ENCODE measurements at regions of chr14 and their contacts with region 1.

Region 1: DNA sequence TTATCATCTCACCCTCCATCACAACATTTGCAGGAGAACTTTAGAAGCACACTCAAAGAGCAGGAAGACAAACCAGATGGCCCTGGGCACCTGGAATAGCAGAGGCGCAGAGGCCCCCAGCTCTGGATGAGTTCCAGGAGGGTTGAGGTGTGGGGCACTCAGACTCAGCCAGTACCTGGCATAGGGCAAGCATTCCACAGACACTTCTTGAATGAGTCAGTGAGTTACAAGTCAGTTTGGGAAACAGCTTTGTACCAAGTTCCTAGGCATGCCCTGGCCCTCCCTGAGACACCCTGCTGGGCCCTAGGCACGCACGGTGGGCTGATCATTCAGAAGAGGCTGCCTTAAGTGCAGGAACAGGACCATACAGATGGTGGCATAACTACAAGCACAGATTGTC is 54.3 kb downstream of the MAP3K9 start:
- DNase-seq: peak; percentile 91
- H3K4me3 ChIP-seq: no peak overlapping the region
- H3K27ac ChIP-seq: peak overlapping the region; percentile 88
- H3K4me1 ChIP-seq: peaks cover 37% of the 10 kb centered on the region
- H3K27me3 ChIP-seq: no peaks in the 10 kb centered on the region
- CTCF ChIP-seq: peak in 1 of 2 donors; percentile 7

Region 2: DNA sequence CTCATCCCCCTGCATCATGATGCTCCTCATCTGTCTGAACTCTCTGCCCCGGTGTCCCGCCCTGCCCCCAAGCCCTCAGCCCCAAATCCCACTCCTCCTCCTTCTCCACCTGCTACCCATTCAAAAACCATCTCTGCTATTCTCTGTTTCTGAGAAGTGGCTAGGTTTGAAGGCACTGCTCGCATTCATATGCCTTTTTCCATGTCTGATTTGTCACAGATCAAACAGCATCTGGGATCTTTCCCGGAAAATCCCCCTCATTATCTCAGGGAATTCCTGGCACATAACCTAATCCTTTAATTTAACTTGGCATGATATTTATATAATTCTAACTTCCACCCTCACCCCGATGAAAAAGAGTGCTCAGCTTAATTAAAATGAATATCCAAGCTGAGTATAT is 216.9 kb before region 1 on chr14:
- CTCF ChIA-PET with region 1: no interaction called
- dilution Hi-C with region 1: no loop called
- in situ Hi-C with region 1: no loop called
- intact Hi-C with region 1: no loop called
- DNase-seq: no peak
- H3K4me3 ChIP-seq: no peak overlapping the region
- H3K27ac ChIP-seq: no peak overlapping the region
- H3K4me1 ChIP-seq: no peaks in the 10 kb centered on the region
- H3K27me3 ChIP-seq: no peaks in the 10 kb centered on the region
- CTCF ChIP-seq: no peak

Region 3: GRCh38 chr14:70622111-70622712 is 132.8 kb before region 1 on chr14:
- CTCF ChIA-PET with region 1: no interaction called
- dilution Hi-C with region 1: no loop called
- in situ Hi-C with region 1: no loop called
- intact Hi-C with region 1: loop called (anchors 1 kb)
- DNase-seq: peak; percentile 52
- H3K4me3 ChIP-seq: no peak overlapping the region
- H3K27ac ChIP-seq: no peak overlapping the region
- H3K4me1 ChIP-seq: peaks cover 7% of the 10 kb centered on the region
- H3K27me3 ChIP-seq: no peaks in the 10 kb centered on the region
- CTCF ChIP-seq: peak; percentile 92 to 95

Region 4: DNA sequence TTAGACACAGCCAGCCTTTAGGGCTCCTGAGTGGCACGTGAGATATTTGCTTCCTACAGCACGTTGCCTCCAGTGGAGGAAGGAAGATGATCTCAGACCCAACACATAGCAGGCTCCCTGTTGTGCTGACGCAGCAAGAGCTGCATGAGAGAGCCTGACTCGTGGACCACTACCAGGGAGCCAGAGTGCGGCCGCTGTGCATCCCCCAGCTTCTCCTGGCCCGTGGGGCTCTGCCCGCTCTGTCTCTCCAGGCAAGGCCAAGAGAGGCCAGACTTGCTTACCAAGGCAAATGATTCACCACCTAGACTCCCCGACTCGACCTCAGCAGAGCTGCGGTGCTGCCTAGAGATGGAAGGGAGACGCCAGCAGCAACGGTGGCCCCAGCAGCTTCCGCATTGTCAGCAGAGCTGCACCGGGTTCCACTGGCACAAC is 16.8 kb after region 1 on chr14:
- CTCF ChIA-PET with region 1: interaction called, 5 read pairs
- dilution Hi-C with region 1: no loop called
- in situ Hi-C with region 1: no loop called
- intact Hi-C with region 1: loop called (anchors 1 kb)
- DNase-seq: no peak
- H3K4me3 ChIP-seq: no peak overlapping the region
- H3K27ac ChIP-seq: peak overlapping the region; percentile 66
- H3K4me1 ChIP-seq: peaks cover 29% of the 10 kb centered on the region
- H3K27me3 ChIP-seq: no peaks in the 10 kb centered on the region
- CTCF ChIP-seq: no peak

Region 5: GRCh38 chr14:70780396-70781075 is 25.5 kb after region 1 on chr14:
- CTCF ChIA-PET with region 1: interaction called, 4 read pairs
- dilution Hi-C with region 1: no loop called
- in situ Hi-C with region 1: no loop called
- intact Hi-C with region 1: loop called (anchors 1 kb)
- DNase-seq: no peak
- H3K4me3 ChIP-seq: no peak overlapping the region
- H3K27ac ChIP-seq: no peak overlapping the region
- H3K4me1 ChIP-seq: peaks cover 72% of the 10 kb centered on the region
- H3K27me3 ChIP-seq: no peaks in the 10 kb centered on the region
- CTCF ChIP-seq: no peak

Region 6: DNA sequence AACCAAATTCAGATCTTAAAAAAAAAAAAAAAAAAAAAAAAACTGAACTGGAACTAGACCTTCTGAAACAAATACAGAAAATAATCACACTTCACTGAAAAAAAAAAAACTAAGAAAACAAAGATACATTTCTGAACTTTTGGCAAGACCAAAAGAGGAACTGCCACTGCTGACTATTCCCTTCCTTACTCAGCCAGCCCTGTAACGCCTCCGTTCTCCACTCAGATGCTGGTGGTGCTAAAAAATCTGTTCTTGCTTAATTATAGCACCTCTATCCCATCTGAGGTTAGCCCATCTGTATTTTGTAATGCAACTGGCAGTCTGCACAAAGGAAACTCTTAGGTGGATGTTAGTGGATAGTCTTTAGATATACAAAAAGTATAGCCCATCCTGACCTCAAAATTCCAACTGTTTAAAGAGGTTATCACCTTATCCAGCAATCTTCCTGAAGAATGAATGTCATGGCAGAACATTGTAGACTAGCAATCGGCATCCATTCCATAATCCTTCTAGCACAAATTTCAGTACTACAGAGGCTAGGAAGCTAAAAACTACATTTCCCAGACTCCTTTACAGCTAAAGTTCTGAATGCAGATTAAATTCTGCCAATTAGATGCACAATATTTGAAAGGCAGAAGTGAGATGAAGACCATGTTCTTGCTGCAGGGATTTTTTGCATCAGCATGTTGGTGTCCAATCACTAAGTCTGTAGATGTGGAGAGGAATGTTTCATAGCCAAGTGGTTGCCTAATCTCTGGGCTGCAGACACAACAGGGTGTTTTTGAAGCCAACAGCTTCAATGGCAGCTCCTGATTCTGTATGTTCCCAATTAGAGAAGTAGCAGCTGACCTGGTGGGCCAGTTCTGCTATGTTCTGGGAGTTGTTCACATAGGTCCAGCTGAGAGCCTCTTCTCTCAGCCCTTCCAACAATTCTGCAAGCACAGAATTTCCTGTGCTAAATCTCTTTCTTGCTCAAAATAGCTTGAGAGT is 48.6 kb after region 1 on chr14:
- CTCF ChIA-PET with region 1: no interaction called
- dilution Hi-C with region 1: no loop called
- in situ Hi-C with region 1: no loop called
- intact Hi-C with region 1: no loop called
- DNase-seq: no peak
- H3K4me3 ChIP-seq: no peak overlapping the region
- H3K27ac ChIP-seq: no peak overlapping the region
- H3K4me1 ChIP-seq: peaks cover 25% of the 10 kb centered on the region
- H3K27me3 ChIP-seq: no peaks in the 10 kb centered on the region
- CTCF ChIP-seq: no peak

Region 7: DNA sequence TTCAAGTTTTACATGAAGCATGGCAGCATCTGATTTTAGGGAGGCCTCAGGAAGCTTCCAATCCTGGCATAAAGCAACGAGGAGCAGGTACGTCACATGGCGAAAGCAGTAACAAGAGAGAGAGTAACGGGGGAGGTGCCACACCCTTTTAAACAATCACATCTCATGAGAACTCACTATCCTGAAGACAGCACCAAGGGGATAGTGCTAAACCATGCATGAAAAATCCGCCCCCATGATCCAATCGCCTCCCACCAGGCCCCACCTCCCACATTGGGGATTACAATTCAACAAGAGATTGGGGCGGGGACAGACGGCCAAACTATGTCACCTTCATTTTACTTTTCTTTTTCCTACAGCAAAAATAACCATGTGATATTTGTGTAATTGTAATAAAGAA is 61.5 kb after region 1 on chr14:
- CTCF ChIA-PET with region 1: no interaction called
- dilution Hi-C with region 1: no loop called
- in situ Hi-C with region 1: no loop called
- intact Hi-C with region 1: loop called (anchors 2 kb)
- DNase-seq: no peak
- H3K4me3 ChIP-seq: no peak overlapping the region
- H3K27ac ChIP-seq: no peak overlapping the region
- H3K4me1 ChIP-seq: peaks cover 30% of the 10 kb centered on the region
- H3K27me3 ChIP-seq: no peaks in the 10 kb centered on the region
- CTCF ChIP-seq: no peak

Region 8: GRCh38 chr14:70972107-70972976 is 217.4 kb after region 1 on chr14:
- CTCF ChIA-PET with region 1: no interaction called
- dilution Hi-C with region 1: no loop called
- in situ Hi-C with region 1: no loop called
- intact Hi-C with region 1: loop called (anchors 1 kb)
- DNase-seq: peak; percentile 70
- H3K4me3 ChIP-seq: no peak overlapping the region
- H3K27ac ChIP-seq: no peak overlapping the region
- H3K4me1 ChIP-seq: no peaks in the 10 kb centered on the region
- H3K27me3 ChIP-seq: no peaks in the 10 kb centered on the region
- CTCF ChIP-seq: peak; percentile 85 to 92

Measured in mammary epithelial cell (primary cell).